ENCODE measurements at regions of chr4 and their contacts with region 1.

Region 1: GRCh38 chr4:73258686-73259570 is at the start of gene ANKRD17:
- DNase-seq: peak; percentile 74 to 95 (median 86)
- ATAC-seq: peak; percentile 74 to 77
- H3K4me3 Mint-ChIP-seq: peak within 1 kb of the TSS; percentile 98 to 100 (median 99)
- H3K27ac Mint-ChIP-seq: peak within 1 kb of the TSS; percentile 100
- H3K4me1 Mint-ChIP-seq: peaks cover 23 to 69% (median 63%) of the 10 kb centered on the region in 4 donors
- H3K27me3 Mint-ChIP-seq: no peaks in the 10 kb centered on the region
- polyA plus RNA-seq, gene ANKRD17: 9.9 to 16.5 (median 10.8) TPM

Region 2: DNA sequence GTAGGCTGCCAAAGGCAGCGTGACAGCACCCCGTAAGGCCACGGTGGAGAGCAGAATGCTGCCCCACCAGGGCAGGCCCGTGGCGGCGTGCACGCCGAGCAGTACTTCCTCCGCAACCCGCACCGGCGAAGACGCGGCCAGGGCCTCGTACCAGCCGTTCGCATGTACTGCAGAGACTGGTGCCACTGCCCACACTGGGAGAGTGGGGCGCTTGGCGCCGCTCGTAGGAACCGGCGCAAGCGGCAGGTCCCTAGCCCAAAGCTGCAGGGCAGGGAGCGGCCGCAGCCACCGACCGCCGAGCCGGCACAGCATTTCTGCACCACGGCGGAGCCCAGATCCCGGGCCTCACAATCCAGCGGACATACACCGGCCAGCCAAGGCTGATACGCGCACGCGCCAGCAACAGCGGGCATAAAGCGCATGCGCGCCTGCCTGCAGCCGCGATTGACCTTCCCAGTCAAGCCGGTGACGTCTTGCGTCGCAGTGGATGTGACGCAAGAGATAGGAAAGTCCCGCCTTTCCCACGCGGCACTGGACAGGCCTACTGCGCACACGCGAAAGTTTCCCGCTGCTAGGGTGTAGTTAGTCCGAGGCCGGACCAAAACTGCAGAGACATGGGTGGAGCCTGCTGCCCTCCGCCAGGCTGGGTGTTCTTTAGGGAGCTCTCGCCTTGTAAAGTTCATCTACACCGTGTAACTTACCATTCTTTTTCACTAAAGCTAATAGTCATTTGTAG is 189.4 kb before region 1 on chr4 and contains the start of gene COX18:
- POLR2A ChIA-PET with region 1: interaction called, 31 read pairs
- DNase-seq: peak; percentile 86 to 98 (median 92)
- ATAC-seq: peak; percentile 80 to 85
- H3K4me3 Mint-ChIP-seq: peak within 1 kb of the TSS; percentile 81 to 93 (median 91)
- H3K27ac Mint-ChIP-seq: peak within 1 kb of the TSS; percentile 95 to 100 (median 98)
- H3K4me1 Mint-ChIP-seq: peaks cover 18 to 46% (median 42%) of the 10 kb centered on the region in 4 donors
- H3K27me3 Mint-ChIP-seq: no peaks in the 10 kb centered on the region
- polyA plus RNA-seq, gene COX18: 5.0 to 8.4 (median 6.4) TPM

Region 3: GRCh38 chr4:73187325-73187724 is 71.6 kb before region 1 on chr4:
- POLR2A ChIA-PET with region 1: no interaction called
- DNase-seq: no peak
- ATAC-seq: peak in 1 of 2 donors; percentile 38
- H3K4me3 Mint-ChIP-seq: no peak overlapping the region
- H3K27ac Mint-ChIP-seq: no peak overlapping the region
- H3K4me1 Mint-ChIP-seq: peaks cover 14 to 44% (median 34%) of the 10 kb centered on the region in 4 donors
- H3K27me3 Mint-ChIP-seq: no peaks in the 10 kb centered on the region

Region 4: GRCh38 chr4:73222466-73223257 is 36.3 kb before region 1 on chr4:
- POLR2A ChIA-PET with region 1: interaction called, 14 read pairs
- DNase-seq: peak; percentile 5 to 85 (median 62)
- ATAC-seq: peak; percentile 99 to 100
- H3K4me3 Mint-ChIP-seq: no peak overlapping the region
- H3K27ac Mint-ChIP-seq: no peak overlapping the region
- H3K4me1 Mint-ChIP-seq: peaks cover 7 to 47% (median 39%) of the 10 kb centered on the region in 4 donors
- H3K27me3 Mint-ChIP-seq: no peaks in the 10 kb centered on the region

Region 5: GRCh38 chr4:73281396-73281795 is 22.5 kb after region 1 on chr4:
- POLR2A ChIA-PET with region 1: no interaction called
- DNase-seq: no peak
- ATAC-seq: no peak
- H3K4me3 Mint-ChIP-seq: no peak overlapping the region
- H3K27ac Mint-ChIP-seq: no peak overlapping the region
- H3K4me1 Mint-ChIP-seq: peaks cover 3 to 25% (median 13%) of the 10 kb centered on the region in 4 donors
- H3K27me3 Mint-ChIP-seq: no peaks in the 10 kb centered on the region

Measured in naive thymus-derived CD8-positive, alpha-beta T cell (primary cell).